ENCODE measurements at regions of chr22 and their contacts with region 1.

Region 1: DNA sequence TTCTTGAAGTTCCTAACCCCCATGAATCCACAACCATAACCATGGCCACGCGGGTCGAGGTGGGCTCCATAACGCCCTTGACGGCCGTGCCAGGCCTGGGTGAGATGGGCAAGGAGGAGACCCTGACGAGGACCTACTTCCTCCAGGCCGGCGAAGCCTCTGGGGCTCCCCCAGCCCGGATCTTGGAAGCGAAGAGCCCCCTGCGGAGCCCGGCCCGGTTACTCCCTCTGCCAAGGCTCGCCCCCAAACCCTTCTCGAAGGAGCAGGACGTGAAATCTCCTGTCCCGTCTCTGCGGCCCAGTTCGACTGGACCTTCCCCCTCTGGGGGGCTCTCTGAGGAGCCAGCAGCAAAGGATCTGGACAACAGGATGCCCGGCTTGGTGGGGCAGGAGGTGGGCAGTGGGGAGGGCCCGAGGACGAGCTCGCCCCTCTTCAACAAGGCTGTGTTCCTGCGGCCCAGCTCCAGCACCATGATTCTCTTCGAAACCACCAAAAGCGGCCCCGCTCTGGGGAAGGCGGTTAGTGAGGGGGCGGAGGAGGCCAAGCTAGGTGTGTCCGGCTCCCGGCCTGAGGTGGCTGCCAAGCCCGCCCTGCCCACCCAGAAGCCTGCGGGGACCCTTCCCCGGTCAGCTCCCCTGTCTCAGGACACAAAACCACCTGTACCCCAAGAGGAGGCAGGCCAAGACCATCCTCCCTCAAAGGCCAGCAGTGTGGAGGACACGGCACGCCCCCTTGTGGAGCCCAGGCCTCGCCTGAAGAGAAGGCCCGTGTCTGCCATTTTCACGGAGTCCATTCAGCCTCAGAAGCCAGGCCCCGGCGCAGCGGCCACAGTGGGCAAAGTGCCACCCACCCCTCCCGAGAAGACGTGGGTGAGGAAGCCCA is 75.7 kb downstream of the KIAA1671 start:
- DNase-seq: peak; percentile 53
- H3K4me3 Mint-ChIP-seq: no peak overlapping the region
- H3K27ac Mint-ChIP-seq: peak overlapping the region; percentile 87
- H3K4me1 Mint-ChIP-seq: peaks cover 46% of the 10 kb centered on the region
- H3K27me3 Mint-ChIP-seq: no peaks in the 10 kb centered on the region

Region 2: GRCh38 chr22:24985826-24986214 is 42.4 kb before region 1 on chr22:
- CTCF ChIA-PET with region 1: interaction called, 14 read pairs
- POLR2A ChIA-PET with region 1: interaction called, 22 read pairs
- DNase-seq: peak; percentile 32
- H3K4me3 Mint-ChIP-seq: peak overlapping the region; percentile 36
- H3K27ac Mint-ChIP-seq: peak overlapping the region; percentile 70
- H3K4me1 Mint-ChIP-seq: peaks cover 62% of the 10 kb centered on the region
- H3K27me3 Mint-ChIP-seq: peaks cover 4% of the 10 kb centered on the region

Region 3: GRCh38 chr22:24996420-24996952 is 31.7 kb before region 1 on chr22:
- CTCF ChIA-PET with region 1: interaction called, 8 read pairs
- POLR2A ChIA-PET with region 1: interaction called, 49 read pairs
- DNase-seq: no peak
- H3K4me3 Mint-ChIP-seq: no peak overlapping the region
- H3K27ac Mint-ChIP-seq: peak overlapping the region; percentile 88
- H3K4me1 Mint-ChIP-seq: peaks cover 69% of the 10 kb centered on the region
- H3K27me3 Mint-ChIP-seq: peaks cover 5% of the 10 kb centered on the region

Measured in activated CD4-positive, alpha-beta memory T cell treated with anti-CD3 and anti-CD28 coated beads, Interleukin-2, amount 10 ng/mL, durations not matched to agents 7 days and 5 days (primary cell).